ENCODE measurements at regions of chr4 and their contacts with region 1.

Region 1: DNA sequence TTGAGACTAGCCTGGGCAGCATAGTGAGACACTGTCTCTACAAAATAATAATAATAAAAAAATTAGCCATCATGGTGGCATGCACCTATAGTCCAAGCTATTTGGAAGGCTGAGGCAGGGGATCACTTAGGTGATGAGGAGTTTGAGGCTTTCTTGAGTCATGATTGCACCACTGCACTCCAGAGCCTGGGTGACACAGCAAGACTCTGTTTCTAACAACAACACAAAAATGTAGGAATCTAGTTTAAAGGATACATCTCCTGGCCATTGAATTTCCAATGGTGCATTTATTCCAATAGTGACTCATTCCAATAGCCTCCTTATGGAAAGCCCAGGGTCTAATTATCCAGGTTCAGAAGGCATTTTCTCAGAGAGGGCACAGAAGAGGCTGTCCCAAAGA is 21.9 kb upstream of the HERC6 start:
- DNase-seq: no peak

Region 2: GRCh38 chr4:88225232-88226105 is 131.3 kb before region 1 on chr4:
- intact Hi-C with region 1: loop called (anchors 5 kb)
- DNase-seq: no peak

Region 3: DNA sequence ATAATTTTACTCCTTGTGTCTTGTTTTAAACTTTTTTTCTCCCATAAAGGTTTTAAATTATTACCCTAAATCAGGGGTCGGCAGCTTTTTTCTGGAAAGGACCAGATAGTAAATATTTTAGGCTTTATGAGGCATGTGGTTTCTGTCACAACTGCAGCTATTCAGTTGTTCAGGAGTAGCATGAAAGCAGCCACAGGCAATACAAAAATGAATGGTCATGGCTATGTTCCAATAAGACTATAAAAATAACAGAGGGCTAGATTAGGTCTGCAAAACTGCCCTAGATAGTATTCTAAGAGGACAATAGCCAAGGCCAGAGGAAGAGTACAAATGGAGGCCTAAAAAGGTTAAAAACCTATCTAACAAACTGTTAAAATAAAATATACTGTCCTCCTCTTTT is 124.8 kb after region 1 on chr4:
- intact Hi-C with region 1: no loop called
- DNase-seq: no peak

Measured in cardiac septum (tissue), 1 donor.